Pancreas (tissue), 10 donors: ENCODE measurements at regions of chr20 and their contacts with region 1.

Region 1: DNA sequence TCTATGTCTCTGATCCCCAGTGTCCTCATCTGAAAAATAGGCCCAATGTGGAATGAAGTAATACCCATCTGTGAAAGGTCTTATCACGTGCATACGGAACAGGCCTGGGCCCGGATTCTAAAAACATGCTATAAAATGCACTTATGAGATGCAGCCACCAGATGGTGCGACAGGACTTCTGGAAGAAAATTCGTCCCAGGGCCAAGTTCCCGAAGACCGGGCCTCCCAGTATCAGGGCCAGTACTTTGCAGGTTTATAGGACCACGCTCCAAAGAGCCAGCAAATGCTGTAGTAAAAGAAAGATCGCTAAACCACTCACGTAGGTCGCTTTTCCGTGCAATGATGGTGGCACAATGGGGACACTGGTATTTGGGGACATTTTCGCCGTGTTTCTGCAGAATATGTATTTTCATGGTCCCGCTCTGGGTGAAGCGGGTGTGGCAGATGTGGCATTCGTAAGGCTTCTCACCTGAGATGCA is 10.6 kb downstream of the CTCFL start:
- DNase-seq: peak in 5 of 6 donors; percentile 50 to 71 (median 55)
- ATAC-seq: peak; percentile 68 to 97 (median 94)
- H3K4me3 ChIP-seq: no peak overlapping the region
- H3K27ac ChIP-seq: no peak overlapping the region
- H3K4me1 ChIP-seq: no peaks in the 10 kb centered on the region
- H3K27me3 ChIP-seq: peaks cover 0 to 3% (median 0%) of the 10 kb centered on the region in 4 donors
- CTCF ChIP-seq: peak; percentile 37 to 63 (median 60)

Region 2: GRCh38 chr20:57374931-57375651 is 139.2 kb before region 1 on chr20:
- intact Hi-C with region 1: loop called in 1 of 3 experiments (anchors 10 kb)
- DNase-seq: no peak
- ATAC-seq: peak in 3 of 4 donors; percentile 41 to 81 (median 67)
- H3K4me3 ChIP-seq: no peak overlapping the region
- H3K27ac ChIP-seq: peak overlapping the region in 2 of 4 donors; percentile 4 to 30
- H3K4me1 ChIP-seq: no peaks in the 10 kb centered on the region
- H3K27me3 ChIP-seq: no peaks in the 10 kb centered on the region
- CTCF ChIP-seq: no peak

Region 3: DNA sequence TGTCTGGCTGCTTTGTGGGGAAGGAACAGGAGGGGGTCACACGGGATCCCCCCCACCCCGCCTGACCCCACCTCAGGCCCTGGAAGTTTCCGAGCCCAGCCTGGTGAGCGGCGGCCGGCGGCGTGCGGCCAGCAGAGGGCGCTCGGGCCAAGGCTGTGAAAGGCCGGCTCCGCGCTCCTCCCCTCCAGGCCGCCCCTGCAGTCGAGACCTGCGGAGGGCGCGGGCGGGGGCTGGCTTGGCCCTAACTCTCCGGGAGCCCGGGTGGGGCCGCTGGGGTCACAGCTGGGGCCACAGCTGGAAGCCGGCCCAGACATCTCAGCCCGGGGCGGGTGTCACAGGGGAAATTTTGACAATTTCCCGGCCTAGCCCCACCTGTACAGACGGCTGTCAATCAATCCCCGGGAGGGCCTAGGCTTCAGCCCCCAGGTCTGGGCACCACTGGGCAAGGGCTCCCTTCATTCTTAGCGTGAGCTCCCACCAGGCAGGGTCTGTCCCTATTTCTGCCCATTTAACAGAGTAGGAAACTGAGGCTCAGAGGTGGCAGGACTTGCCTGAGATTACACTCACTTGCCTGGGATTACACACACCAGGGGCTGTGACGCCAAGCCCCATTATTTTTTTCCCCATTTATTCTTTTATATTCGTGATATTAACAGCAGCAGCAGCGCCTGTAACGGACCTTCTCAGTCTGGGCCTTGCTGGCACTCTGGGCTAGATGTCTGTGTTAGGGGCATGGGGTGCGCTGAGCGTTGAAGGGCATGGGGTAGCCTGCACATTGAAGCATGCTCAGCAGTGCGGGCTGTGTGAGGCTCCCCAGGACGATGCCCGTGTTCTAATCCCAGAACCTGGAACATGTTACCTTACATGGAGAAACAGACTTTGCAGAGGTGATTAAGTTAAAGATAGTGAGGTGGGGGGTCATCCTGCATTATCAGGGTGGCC is 83.0 kb after region 1 on chr20:
- intact Hi-C with region 1: loop called in 2 of 3 experiments (anchors 5 kb)
- DNase-seq: peak in 5 of 6 donors; percentile 40 to 92 (median 61)
- ATAC-seq: peak; percentile 84 to 93 (median 88)
- H3K4me3 ChIP-seq: peak overlapping the region in 1 of 4 donors; percentile 20
- H3K27ac ChIP-seq: no peak overlapping the region
- H3K4me1 ChIP-seq: no peaks in the 10 kb centered on the region
- H3K27me3 ChIP-seq: no peaks in the 10 kb centered on the region
- CTCF ChIP-seq: peak; percentile 82 to 97 (median 94)

Region 4: DNA sequence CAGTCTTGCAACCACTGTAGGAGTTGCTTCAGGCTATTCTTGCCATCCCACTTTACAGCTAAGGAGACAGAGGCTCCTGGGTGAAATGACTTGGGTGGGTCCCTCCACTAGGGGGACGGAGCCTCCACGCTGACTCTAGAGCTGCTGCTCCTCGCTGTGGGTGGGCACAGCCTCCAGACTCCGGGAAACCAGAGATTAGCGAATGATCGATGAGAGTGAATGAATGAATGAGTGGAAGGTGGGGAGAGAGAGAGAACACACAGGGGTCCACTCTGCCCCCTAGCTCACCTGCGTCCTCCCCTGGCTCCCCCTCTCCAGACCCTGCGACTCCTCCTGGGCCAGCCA is 95.5 kb after region 1 on chr20:
- intact Hi-C with region 1: no loop called
- DNase-seq: no peak
- ATAC-seq: no peak
- H3K4me3 ChIP-seq: no peak overlapping the region
- H3K27ac ChIP-seq: no peak overlapping the region
- H3K4me1 ChIP-seq: no peaks in the 10 kb centered on the region
- H3K27me3 ChIP-seq: no peaks in the 10 kb centered on the region
- CTCF ChIP-seq: no peak

Region 5: GRCh38 chr20:58209652-58210397 is 695.5 kb after region 1 on chr20:
- intact Hi-C with region 1: loop called in 1 of 3 experiments (anchors 5 kb)
- DNase-seq: peak; percentile 60 to 99 (median 86)
- ATAC-seq: peak; percentile 88 to 99 (median 95)
- H3K4me3 ChIP-seq: no peak overlapping the region
- H3K27ac ChIP-seq: no peak overlapping the region
- H3K4me1 ChIP-seq: no peaks in the 10 kb centered on the region
- H3K27me3 ChIP-seq: no peaks in the 10 kb centered on the region
- CTCF ChIP-seq: peak; percentile 100